ENCODE measurements at regions of chr14 and their contacts with region 1.

Region 1: DNA sequence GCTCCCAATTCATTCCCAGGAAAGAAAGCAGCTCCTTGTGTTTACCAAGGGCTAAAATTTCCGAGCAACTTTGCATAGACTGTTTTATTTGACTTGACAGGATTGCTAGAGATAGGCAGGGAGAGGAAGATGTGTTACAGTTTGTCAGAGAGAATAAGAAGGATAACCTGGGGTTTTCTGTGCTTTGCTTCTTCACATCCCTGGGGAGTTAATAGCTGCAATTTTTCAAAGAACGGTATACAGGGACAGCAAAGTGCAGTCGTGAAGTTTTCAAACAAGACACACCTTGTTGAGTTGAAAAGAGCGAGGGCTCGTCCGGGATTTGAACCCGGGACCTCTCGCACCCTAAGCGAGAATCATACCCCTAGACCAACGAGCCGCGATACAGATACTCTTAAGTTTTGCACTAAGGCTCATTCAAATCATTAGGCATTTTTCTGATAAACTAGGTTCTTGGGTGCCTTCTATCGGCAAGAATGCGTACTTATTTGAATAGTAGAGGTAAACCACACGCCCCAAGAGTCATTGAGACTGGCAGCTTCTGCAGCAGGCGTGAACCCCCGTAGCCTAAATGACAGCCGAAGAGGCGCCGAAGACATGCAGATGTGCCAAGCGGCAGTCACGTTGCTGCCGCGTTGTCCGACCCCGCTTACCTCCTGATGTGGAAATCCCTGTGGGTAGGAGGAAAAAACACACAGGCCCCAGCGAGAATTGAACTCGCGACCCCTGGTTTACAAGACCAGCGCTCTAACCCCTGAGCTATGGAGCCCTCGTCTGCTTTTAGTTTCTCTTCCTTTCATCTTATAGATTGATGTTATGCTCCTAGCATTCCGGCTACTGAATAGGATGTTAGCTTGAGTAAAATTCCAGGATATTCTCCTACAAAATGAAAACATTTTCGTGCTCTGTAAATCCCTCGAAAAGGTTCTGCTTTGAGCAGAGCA is 22.2 kb upstream of the RNASE12 start:
- DNase-seq: peak; percentile 97
- ATAC-seq: peak; percentile 73
- H3K4me3 ChIP-seq: peak overlapping the region; percentile 49 to 80 (median 70)
- H3K4me3 Mint-ChIP-seq: no peak overlapping the region
- H3K27ac ChIP-seq: peak overlapping the region; percentile 67 to 76
- H3K27ac Mint-ChIP-seq: no peak overlapping the region
- H3K4me1 ChIP-seq: peaks cover 42 to 51% of the 10 kb centered on the region in 2 donors
- H3K4me1 Mint-ChIP-seq: peaks cover 9% of the 10 kb centered on the region
- H3K27me3 ChIP-seq: peaks cover 0 to 6% (median 0%) of the 10 kb centered on the region in 4 experiments
- H3K27me3 Mint-ChIP-seq: peaks cover 5% of the 10 kb centered on the region
- CTCF ChIP-seq: peak; percentile 51

Region 2: DNA sequence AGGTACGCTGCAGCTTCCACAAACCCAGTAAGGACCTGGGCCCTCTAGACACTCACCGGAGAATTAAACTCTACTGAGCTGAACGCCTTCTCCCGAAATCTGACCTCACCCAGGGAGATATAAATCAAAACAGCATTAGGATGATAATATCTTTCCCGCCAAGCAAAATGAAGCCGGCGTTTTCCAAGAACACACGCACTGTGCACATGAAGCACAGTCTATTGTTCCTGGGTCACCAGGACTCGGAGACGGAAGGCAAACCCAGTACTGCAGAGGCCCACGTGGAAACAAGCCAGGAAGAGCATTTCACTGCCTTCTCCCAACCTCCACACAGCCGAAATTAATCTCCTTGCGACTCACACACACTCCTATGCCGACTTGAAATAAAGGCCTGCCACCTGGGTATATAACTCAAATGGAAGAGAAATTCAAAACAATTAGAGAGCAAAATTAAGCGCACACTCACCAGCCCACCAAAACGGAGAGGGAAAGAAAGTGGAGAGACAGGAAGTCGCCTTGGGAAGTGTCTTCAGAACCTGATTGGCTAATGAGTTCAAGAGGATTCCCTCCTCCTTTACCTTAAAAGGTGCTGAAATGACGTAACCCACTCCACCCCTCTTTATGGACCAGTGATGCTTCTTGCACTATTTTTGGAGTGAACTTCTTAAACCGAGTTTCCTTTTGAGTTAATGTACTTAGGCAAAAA is 280.4 kb before region 1 on chr14 and contains the start of gene CCNB1IP1:
- CTCF ChIA-PET with region 1: interaction called, 215 read pairs
- POLR2A ChIA-PET with region 1: interaction called, 4 read pairs
- intact Hi-C with region 1: no loop called
- DNase-seq: peak; percentile 83
- ATAC-seq: peak; percentile 99
- H3K4me3 ChIP-seq: peak within 1 kb of the TSS; percentile 54 to 100 (median 93)
- H3K4me3 Mint-ChIP-seq: peak within 1 kb of the TSS; percentile 99
- H3K27ac ChIP-seq: peak within 1 kb of the TSS; percentile 54 to 78
- H3K27ac Mint-ChIP-seq: peak within 1 kb of the TSS; percentile 93
- H3K4me1 ChIP-seq: peaks cover 13 to 18% of the 10 kb centered on the region in 2 donors
- H3K4me1 Mint-ChIP-seq: peaks cover 35% of the 10 kb centered on the region
- H3K27me3 ChIP-seq: no peaks in the 10 kb centered on the region
- H3K27me3 Mint-ChIP-seq: no peaks in the 10 kb centered on the region
- CTCF ChIP-seq: no peak
- total RNA-seq, gene CCNB1IP1: 24.7 and 26.0 TPM in 2 replicates

Region 3: DNA sequence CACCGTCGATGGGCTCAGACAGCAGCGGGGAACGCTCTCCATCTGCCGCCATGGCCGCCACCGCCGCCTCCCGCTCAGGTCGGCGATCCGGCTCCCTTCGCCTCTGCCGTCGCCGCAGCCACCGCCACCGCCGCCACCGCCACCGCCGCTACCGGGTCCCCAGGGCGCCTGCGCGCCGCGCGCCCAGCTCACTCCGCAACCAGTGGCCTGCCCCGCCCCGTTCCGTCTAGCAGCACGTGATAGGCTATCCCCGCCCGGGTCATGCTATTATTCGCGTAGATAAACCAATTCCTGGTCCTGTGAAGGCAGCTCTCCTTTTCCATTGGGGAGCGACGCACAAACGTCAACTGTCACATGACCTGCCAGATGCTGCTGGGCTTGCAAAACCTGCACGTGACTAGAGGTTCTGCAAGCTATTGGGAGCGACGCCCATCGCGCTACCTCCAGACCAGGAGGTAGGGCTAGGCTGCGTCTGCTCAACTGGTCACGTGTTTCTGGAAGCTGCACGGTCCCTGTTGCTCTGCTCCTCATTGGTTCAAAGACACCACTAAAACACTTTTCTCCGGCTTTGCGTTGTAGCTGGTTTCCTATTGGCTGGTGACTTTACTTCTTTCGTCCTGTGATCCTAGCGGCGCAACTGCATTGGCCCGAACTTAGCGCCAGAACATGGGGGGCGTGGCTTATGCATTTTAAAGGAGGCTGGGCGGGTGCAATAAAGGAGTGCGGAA is 151.9 kb before region 1 on chr14 and contains the start of gene PIP4P1:
- CTCF ChIA-PET with region 1: interaction called, 4 read pairs
- POLR2A ChIA-PET with region 1: interaction called, 3 read pairs
- intact Hi-C with region 1: loop called (anchors 2 kb)
- DNase-seq: peak; percentile 100
- ATAC-seq: peak; percentile 84
- H3K4me3 ChIP-seq: peak within 1 kb of the TSS; percentile 75 to 90 (median 83)
- H3K4me3 Mint-ChIP-seq: peak within 1 kb of the TSS; percentile 94
- H3K27ac ChIP-seq: peak within 1 kb of the TSS; percentile 98
- H3K27ac Mint-ChIP-seq: peak within 1 kb of the TSS; percentile 98
- H3K4me1 ChIP-seq: peaks cover 33 to 59% of the 10 kb centered on the region in 2 donors
- H3K4me1 Mint-ChIP-seq: peaks cover 45% of the 10 kb centered on the region
- H3K27me3 ChIP-seq: no peaks in the 10 kb centered on the region
- H3K27me3 Mint-ChIP-seq: no peaks in the 10 kb centered on the region
- CTCF ChIP-seq: no peak
- total RNA-seq, gene PIP4P1: 97.5 and 101 TPM in 2 replicates

Region 4: DNA sequence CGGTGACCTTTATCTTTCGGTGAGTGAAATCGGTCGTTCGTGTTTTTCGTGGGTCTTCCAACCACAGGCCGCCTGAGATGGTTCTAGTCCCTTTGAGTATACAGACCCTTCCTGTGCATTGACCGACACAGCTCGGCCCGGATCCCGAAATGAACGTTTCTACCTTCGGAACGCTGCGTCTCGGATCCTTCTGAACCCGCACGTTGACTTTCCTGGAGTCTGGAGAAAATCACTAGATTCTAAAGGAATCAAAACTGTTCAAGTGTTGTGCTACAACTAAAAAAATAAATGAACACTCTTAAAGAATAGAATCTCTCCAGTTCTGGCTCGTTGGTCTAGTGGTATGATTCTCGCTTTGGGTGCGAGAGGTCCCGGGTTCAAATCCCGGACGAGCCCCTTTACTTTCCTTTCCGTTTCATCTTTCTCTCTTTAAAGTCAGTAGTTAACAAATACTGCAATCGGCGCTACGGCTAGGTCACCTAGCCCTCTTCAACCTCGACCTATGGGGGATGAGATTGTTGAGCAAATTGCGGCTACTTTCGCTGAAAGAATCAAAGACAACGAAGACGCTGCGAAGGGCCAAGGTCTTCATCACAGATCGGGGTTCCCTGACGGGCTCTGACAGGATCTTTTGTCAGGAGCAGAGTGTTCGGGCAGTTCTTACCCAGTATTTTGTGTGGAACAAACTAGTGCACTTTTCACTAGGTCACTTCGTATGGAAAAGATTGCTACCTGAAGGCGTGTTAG is 19.5 kb after region 1 on chr14:
- CTCF ChIA-PET with region 1: interaction called, 21 read pairs
- POLR2A ChIA-PET with region 1: interaction called, 7 read pairs
- intact Hi-C with region 1: loop called (anchors 1 kb)
- DNase-seq: peak; percentile 81
- ATAC-seq: peak; percentile 49
- H3K4me3 ChIP-seq: peak overlapping the region in 4 of 5 experiments; percentile 33 to 65 (median 50)
- H3K4me3 Mint-ChIP-seq: peak overlapping the region; percentile 86
- H3K27ac ChIP-seq: no peak overlapping the region
- H3K27ac Mint-ChIP-seq: peak overlapping the region; percentile 91
- H3K4me1 ChIP-seq: peaks cover 35 to 38% of the 10 kb centered on the region in 2 donors
- H3K4me1 Mint-ChIP-seq: peaks cover 44% of the 10 kb centered on the region
- H3K27me3 ChIP-seq: peaks cover 0 to 38% (median 14%) of the 10 kb centered on the region in 4 experiments
- H3K27me3 Mint-ChIP-seq: peaks cover 35% of the 10 kb centered on the region
- CTCF ChIP-seq: no peak

Region 5: DNA sequence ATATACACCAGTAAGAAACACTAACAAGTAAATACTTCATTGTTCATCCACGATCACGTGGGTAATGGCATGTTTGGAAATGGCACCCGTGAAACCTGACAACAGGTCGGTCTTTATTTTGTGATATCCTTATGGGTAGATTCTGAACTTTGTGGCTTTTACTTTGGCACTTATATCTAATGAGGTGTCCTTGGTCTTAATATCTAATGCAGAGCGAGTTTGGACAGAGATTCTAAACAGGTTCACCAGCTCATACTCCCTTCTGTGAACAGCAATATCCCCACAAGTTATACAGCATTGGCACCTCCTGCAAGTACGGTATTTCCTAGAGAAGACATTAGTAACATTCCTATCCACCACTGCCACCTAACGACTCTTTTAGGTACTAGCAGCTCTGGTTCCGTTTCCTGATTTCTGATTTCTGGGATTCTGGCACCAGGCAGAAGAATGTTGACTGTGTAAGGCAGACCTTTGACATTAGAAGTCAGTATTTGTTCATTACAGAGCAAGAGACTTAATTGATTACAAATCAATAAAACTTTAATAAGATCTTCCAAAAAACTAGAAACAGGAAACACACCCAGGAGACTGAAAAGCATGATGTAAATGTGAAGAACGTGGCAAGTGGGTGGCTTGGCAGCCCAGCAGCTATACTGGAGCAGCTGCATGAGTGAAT is 77.6 kb after region 1 on chr14:
- CTCF ChIA-PET with region 1: interaction called, 50 read pairs
- POLR2A ChIA-PET with region 1: no interaction called
- intact Hi-C with region 1: loop called (anchors 1 kb)
- DNase-seq: peak; percentile 83
- ATAC-seq: peak; percentile 97
- H3K4me3 ChIP-seq: no peak overlapping the region
- H3K4me3 Mint-ChIP-seq: no peak overlapping the region
- H3K27ac ChIP-seq: no peak overlapping the region
- H3K27ac Mint-ChIP-seq: no peak overlapping the region
- H3K4me1 ChIP-seq: peaks cover 0 to 3% of the 10 kb centered on the region in 2 donors
- H3K4me1 Mint-ChIP-seq: peaks cover 5% of the 10 kb centered on the region
- H3K27me3 ChIP-seq: no peaks in the 10 kb centered on the region
- H3K27me3 Mint-ChIP-seq: no peaks in the 10 kb centered on the region
- CTCF ChIP-seq: peak; percentile 99

Region 6: DNA sequence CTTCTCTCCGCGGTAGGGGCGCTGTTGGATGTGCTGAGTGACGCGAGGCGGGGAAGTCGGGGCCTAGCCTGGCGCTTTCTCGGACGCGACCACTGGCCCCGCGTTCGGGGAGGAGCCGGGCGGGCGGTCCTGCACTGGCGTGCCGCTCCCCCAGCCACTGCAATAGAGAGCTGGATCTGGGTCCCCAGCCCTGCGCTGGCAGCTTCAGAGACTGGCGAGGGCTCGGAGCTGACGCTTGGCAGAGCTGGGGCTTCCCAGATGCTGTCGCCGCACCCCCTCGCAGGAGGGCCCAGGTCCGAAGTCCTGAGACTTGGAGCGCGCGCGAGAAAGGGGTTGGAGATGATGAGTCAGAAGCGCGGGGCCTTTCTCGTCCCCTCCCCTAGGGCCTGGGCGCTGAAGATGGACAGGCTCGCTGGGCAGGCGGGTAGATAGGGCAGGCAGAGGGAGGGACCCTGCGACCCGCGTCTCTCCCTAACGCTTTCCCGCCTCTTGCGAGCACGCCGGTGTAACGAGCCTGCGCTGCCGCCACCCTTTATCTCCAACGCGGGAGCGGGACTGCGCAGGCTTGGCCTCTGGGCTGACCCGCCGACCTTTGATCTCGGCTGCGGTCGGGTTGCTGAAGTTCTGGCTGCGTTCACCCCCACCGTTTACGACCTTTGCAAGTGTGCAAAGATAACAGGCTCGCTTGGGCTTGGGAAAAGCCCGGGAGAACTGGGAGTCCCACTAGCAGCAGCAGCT is 490.5 kb after region 1 on chr14:
- CTCF ChIA-PET with region 1: no interaction called
- POLR2A ChIA-PET with region 1: no interaction called
- intact Hi-C with region 1: loop called (anchors 10 kb)
- DNase-seq: peak; percentile 97
- ATAC-seq: peak; percentile 86
- H3K4me3 ChIP-seq: peak overlapping the region; percentile 72 to 92 (median 84)
- H3K4me3 Mint-ChIP-seq: peak overlapping the region; percentile 78
- H3K27ac ChIP-seq: peak overlapping the region; percentile 93 to 96
- H3K27ac Mint-ChIP-seq: peak overlapping the region; percentile 96
- H3K4me1 ChIP-seq: peaks cover 17 to 25% of the 10 kb centered on the region in 2 donors
- H3K4me1 Mint-ChIP-seq: peaks cover 15% of the 10 kb centered on the region
- H3K27me3 ChIP-seq: peaks cover 0 to 25% (median 15%) of the 10 kb centered on the region in 4 experiments
- H3K27me3 Mint-ChIP-seq: peaks cover 26% of the 10 kb centered on the region
- CTCF ChIP-seq: peak; percentile 76

Measured in B cell (primary cell).